ENCODE measurements at regions of chr7 and their contacts with region 1.

Region 1: GRCh38 chr7:112414855-112415490 is 35.3 kb upstream of the IFRD1 start:
- DNase-seq: peak; percentile 30
- H3K4me3 ChIP-seq: no peak overlapping the region
- H3K27ac ChIP-seq: no peak overlapping the region
- H3K4me1 ChIP-seq: peaks cover 3% of the 10 kb centered on the region
- H3K27me3 ChIP-seq: no peaks in the 10 kb centered on the region
- CTCF ChIP-seq: peak; percentile 63 to 66

Region 2: DNA sequence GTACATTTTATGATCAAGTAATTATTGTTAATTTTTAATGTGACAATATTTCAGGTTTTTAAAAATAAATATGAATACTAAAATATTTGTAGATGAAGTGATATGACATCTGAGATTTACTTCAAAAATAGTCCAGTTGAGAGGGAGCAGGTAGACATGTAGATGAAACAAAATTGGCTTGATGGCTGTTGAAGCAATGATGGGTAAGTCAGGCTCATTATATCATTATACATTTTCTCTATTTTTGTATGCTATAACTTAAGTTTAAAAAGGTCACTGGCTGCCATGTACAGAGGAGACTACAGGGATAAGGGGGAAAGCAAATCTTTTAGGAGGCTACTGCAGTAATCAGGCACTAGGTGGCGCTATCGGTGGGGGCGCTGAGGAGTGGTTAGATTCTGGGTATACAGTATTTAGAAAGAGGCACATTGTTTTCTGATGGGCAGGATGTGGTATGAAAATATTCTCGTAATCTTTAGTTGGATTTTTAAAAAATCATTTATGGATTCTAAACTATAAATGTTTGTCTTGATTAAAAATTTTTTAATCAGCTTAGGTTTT is 662.9 kb before region 1 on chr7:
- CTCF ChIA-PET with region 1: interaction called, 3 read pairs
- dilution Hi-C with region 1: no loop called
- in situ Hi-C with region 1: loop called (anchors 10 kb)
- intact Hi-C with region 1: loop called (anchors 1 kb)
- DNase-seq: peak; percentile 30
- H3K4me3 ChIP-seq: no peak overlapping the region
- H3K27ac ChIP-seq: no peak overlapping the region
- H3K4me1 ChIP-seq: peaks cover 5% of the 10 kb centered on the region
- H3K27me3 ChIP-seq: no peaks in the 10 kb centered on the region
- CTCF ChIP-seq: peak; percentile 88 to 94

Region 3: GRCh38 chr7:111855161-111855856 is 559.7 kb before region 1 on chr7:
- CTCF ChIA-PET with region 1: no interaction called
- dilution Hi-C with region 1: no loop called
- in situ Hi-C with region 1: no loop called
- intact Hi-C with region 1: loop called (anchors 1 kb)
- DNase-seq: peak; percentile 48
- H3K4me3 ChIP-seq: no peak overlapping the region
- H3K27ac ChIP-seq: no peak overlapping the region
- H3K4me1 ChIP-seq: no peaks in the 10 kb centered on the region
- H3K27me3 ChIP-seq: no peaks in the 10 kb centered on the region
- CTCF ChIP-seq: peak; percentile 68 to 86

Region 4: GRCh38 chr7:112079673-112080072 is 335.3 kb before region 1 on chr7:
- CTCF ChIA-PET with region 1: no interaction called
- dilution Hi-C with region 1: no loop called
- in situ Hi-C with region 1: no loop called
- intact Hi-C with region 1: loop called (anchors 10 kb)
- DNase-seq: no peak
- H3K4me3 ChIP-seq: no peak overlapping the region
- H3K27ac ChIP-seq: peak overlapping the region; percentile 23
- H3K4me1 ChIP-seq: peaks cover 20% of the 10 kb centered on the region
- H3K27me3 ChIP-seq: no peaks in the 10 kb centered on the region
- CTCF ChIP-seq: peak in 1 of 2 donors; percentile 13

Region 5: DNA sequence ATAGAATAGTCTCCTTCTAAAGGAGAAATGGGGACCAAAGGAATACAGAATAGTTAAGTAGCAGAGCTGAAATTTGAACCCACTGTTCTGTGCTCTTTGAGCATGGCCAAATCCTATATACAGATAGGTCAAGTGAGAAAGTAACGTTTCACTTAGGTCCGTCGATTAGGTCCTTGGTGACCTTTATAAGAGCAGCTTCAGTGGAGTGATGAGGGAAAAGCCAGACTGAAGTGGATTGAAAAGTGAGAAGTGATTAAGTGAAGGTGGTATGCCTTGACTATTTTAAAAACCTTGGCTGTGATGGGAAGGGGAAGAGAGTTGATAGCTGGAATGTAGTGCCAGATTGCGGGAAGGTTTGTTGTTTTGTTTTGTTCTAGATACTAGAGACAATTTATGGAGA is 55.2 kb after region 1 on chr7:
- CTCF ChIA-PET with region 1: no interaction called
- dilution Hi-C with region 1: no loop called
- in situ Hi-C with region 1: no loop called
- intact Hi-C with region 1: no loop called
- DNase-seq: no peak
- H3K4me3 ChIP-seq: no peak overlapping the region
- H3K27ac ChIP-seq: no peak overlapping the region
- H3K4me1 ChIP-seq: no peaks in the 10 kb centered on the region
- H3K27me3 ChIP-seq: no peaks in the 10 kb centered on the region
- CTCF ChIP-seq: no peak

Region 6: DNA sequence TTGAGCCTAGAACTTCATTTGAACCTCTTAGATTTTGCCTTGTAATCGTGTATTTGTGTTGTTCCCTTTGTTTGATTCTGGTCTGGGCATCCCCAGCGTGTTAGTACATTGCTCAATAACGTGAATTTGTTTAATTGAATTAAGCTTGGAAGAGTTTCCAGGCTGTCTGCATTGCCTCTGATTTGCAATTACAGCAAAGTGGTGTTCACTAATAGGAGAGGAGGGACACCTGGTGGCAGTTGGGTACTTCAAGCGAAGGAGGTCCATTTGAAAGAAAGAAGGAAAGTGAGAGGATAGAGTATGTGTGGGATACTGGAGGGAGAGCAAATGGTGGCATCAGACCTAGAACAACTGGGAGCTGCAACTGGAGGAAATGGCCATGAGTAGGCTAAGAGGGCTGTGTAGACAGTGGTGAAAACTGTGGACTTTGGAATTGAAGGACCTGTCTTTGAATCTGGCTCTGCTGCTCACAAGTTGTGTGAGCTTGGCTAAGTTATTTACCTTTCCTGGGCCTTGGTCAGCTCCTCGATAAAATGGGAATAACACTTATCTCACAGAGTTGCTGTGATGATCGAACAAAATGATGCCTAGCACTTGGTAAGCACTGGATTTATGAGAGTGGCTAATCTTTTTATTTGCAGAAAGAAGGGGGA is 81.0 kb after region 1 on chr7:
- CTCF ChIA-PET with region 1: no interaction called
- dilution Hi-C with region 1: no loop called
- in situ Hi-C with region 1: no loop called
- intact Hi-C with region 1: loop called (anchors 2 kb)
- DNase-seq: peak; percentile 64
- H3K4me3 ChIP-seq: no peak overlapping the region
- H3K27ac ChIP-seq: no peak overlapping the region
- H3K4me1 ChIP-seq: peaks cover 4% of the 10 kb centered on the region
- H3K27me3 ChIP-seq: no peaks in the 10 kb centered on the region
- CTCF ChIP-seq: peak; percentile 57 to 77

Measured in mammary epithelial cell (primary cell).